ENCODE measurements at regions of chr3 and their contacts with region 1.

Region 1: DNA sequence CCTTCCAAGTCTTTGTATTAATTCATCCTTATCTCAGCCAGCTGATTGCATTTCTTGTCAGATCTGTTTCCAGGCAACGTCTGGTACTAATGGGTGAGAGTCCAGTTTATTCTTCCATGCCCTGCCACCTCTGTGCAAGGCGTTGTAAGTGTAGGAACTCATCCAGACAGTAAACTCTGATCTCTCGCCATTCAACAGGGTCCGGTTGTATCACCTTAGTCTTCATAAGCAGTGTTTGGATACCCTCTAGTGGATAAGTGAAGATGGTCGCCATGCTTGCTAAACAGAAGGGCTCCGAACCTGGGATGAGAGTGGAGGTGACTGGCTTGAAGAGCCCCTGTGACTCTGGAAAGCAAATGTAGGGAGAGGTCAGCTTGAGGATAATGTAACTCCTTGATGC is 51.6 kb upstream of the CMTM7 start:
- DNase-seq: peak; percentile 36
- H3K4me3 ChIP-seq: no peak overlapping the region
- H3K27ac ChIP-seq: no peak overlapping the region
- H3K4me1 ChIP-seq: peaks cover 6% of the 10 kb centered on the region
- H3K27me3 ChIP-seq: no peaks in the 10 kb centered on the region
- CTCF ChIP-seq: peak; percentile 33 to 34
- POLR2A ChIP-seq: no peak

Region 2: GRCh38 chr3:31671976-31672375 is 668.1 kb before region 1 on chr3:
- CTCF ChIA-PET with region 1: no interaction called
- POLR2A ChIA-PET with region 1: interaction called, 11 read pairs
- dilution Hi-C with region 1: no loop called
- intact Hi-C with region 1: no loop called
- DNase-seq: no peak
- H3K4me3 ChIP-seq: no peak overlapping the region
- H3K27ac ChIP-seq: no peak overlapping the region
- H3K4me1 ChIP-seq: peaks cover 16% of the 10 kb centered on the region
- H3K27me3 ChIP-seq: no peaks in the 10 kb centered on the region
- CTCF ChIP-seq: no peak
- POLR2A ChIP-seq: no peak

Region 3: GRCh38 chr3:32216172-32216783 is 123.8 kb before region 1 on chr3:
- CTCF ChIA-PET with region 1: no interaction called
- POLR2A ChIA-PET with region 1: no interaction called
- dilution Hi-C with region 1: no loop called
- intact Hi-C with region 1: no loop called
- DNase-seq: no peak
- H3K4me3 ChIP-seq: no peak overlapping the region
- H3K27ac ChIP-seq: no peak overlapping the region
- H3K4me1 ChIP-seq: peaks cover 5% of the 10 kb centered on the region
- H3K27me3 ChIP-seq: no peaks in the 10 kb centered on the region
- CTCF ChIP-seq: no peak
- POLR2A ChIP-seq: no peak

Measured in endothelial cell of umbilical vein (primary cell).